Activated B cell treated with CpG ODN at 0.5 μM for 24 hours (primary cell): ENCODE measurements at regions of chr5 and their contacts with region 1.

Region 1: GRCh38 chr5:91225848-91226686 is 157.1 kb downstream of the ARRDC3 start:
- DNase-seq: peak; percentile 22
- ATAC-seq: peak; percentile 66
- H3K4me3 Mint-ChIP-seq: no peak overlapping the region
- H3K27ac Mint-ChIP-seq: no peak overlapping the region
- H3K4me1 Mint-ChIP-seq: no peaks in the 10 kb centered on the region
- H3K27me3 Mint-ChIP-seq: peaks cover under 1% of the 10 kb centered on the region
- CTCF ChIP-seq: peak; percentile 27

Region 2: GRCh38 chr5:90866333-90866732 is 359.7 kb before region 1 on chr5:
- CTCF ChIA-PET with region 1: no interaction called
- POLR2A ChIA-PET with region 1: no interaction called
- intact Hi-C with region 1: loop called (anchors 2 kb)
- DNase-seq: no peak
- ATAC-seq: peak; percentile 37
- H3K4me3 Mint-ChIP-seq: no peak overlapping the region
- H3K27ac Mint-ChIP-seq: no peak overlapping the region
- H3K4me1 Mint-ChIP-seq: peaks cover 2% of the 10 kb centered on the region
- H3K27me3 Mint-ChIP-seq: no peaks in the 10 kb centered on the region
- CTCF ChIP-seq: no peak

Region 3: DNA sequence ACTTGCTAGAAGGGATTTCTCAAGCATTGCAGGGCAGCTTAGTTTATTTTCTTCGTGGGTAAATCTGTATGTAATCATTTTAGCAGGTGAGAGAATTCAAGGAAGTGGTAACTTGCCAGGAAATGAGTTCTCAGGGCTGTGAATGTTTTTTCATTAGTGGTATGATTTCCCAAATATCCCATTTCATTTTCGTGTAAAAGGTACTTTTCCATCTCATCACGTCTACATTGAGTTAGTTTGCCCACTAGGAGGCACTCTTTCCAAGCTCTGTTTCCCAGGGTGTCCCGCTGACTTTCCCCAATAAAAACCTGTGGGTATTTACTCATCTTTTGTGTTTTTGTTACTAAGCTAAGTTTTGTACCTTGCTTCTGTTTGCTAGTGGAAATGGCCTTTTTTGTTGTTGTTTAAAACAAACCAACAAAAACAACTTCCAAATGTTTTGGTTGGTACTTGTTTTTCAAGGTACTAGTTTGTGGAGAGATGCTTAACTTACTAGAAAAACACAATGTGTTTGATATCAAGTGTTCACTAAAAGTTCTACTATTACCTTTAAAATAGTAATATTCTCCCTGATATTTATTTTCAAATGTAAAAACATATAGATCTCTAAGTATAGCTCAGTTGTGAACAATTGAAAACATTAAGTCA is 293.9 kb before region 1 on chr5:
- CTCF ChIA-PET with region 1: no interaction called
- POLR2A ChIA-PET with region 1: no interaction called
- intact Hi-C with region 1: loop called (anchors 2 kb)
- DNase-seq: no peak
- ATAC-seq: no peak
- H3K4me3 Mint-ChIP-seq: no peak overlapping the region
- H3K27ac Mint-ChIP-seq: no peak overlapping the region
- H3K4me1 Mint-ChIP-seq: no peaks in the 10 kb centered on the region
- H3K27me3 Mint-ChIP-seq: no peaks in the 10 kb centered on the region
- CTCF ChIP-seq: no peak

Region 4: GRCh38 chr5:91101600-91102379 is 124.3 kb before region 1 on chr5:
- CTCF ChIA-PET with region 1: no interaction called
- POLR2A ChIA-PET with region 1: no interaction called
- intact Hi-C with region 1: loop called (anchors 1 kb)
- DNase-seq: no peak
- ATAC-seq: peak; percentile 92
- H3K4me3 Mint-ChIP-seq: no peak overlapping the region
- H3K27ac Mint-ChIP-seq: no peak overlapping the region
- H3K4me1 Mint-ChIP-seq: no peaks in the 10 kb centered on the region
- H3K27me3 Mint-ChIP-seq: no peaks in the 10 kb centered on the region
- CTCF ChIP-seq: no peak

Region 5: GRCh38 chr5:91170266-91170665 is 55.8 kb before region 1 on chr5:
- CTCF ChIA-PET with region 1: no interaction called
- POLR2A ChIA-PET with region 1: no interaction called
- intact Hi-C with region 1: no loop called
- DNase-seq: no peak
- ATAC-seq: no peak
- H3K4me3 Mint-ChIP-seq: no peak overlapping the region
- H3K27ac Mint-ChIP-seq: no peak overlapping the region
- H3K4me1 Mint-ChIP-seq: no peaks in the 10 kb centered on the region
- H3K27me3 Mint-ChIP-seq: peaks cover 3% of the 10 kb centered on the region
- CTCF ChIP-seq: no peak

Region 6: GRCh38 chr5:91240175-91240574 is 14.1 kb after region 1 on chr5:
- CTCF ChIA-PET with region 1: no interaction called
- POLR2A ChIA-PET with region 1: no interaction called
- intact Hi-C with region 1: no loop called
- DNase-seq: no peak
- ATAC-seq: no peak
- H3K4me3 Mint-ChIP-seq: no peak overlapping the region
- H3K27ac Mint-ChIP-seq: no peak overlapping the region
- H3K4me1 Mint-ChIP-seq: no peaks in the 10 kb centered on the region
- H3K27me3 Mint-ChIP-seq: peaks cover 8% of the 10 kb centered on the region
- CTCF ChIP-seq: no peak

Region 7: GRCh38 chr5:91280362-91281269 is 54.5 kb after region 1 on chr5:
- CTCF ChIA-PET with region 1: no interaction called
- POLR2A ChIA-PET with region 1: no interaction called
- intact Hi-C with region 1: loop called (anchors 2 kb)
- DNase-seq: peak; percentile 80
- ATAC-seq: peak; percentile 88
- H3K4me3 Mint-ChIP-seq: peak overlapping the region; percentile 81
- H3K27ac Mint-ChIP-seq: peak overlapping the region; percentile 81
- H3K4me1 Mint-ChIP-seq: peaks cover 21% of the 10 kb centered on the region
- H3K27me3 Mint-ChIP-seq: peaks cover 8% of the 10 kb centered on the region
- CTCF ChIP-seq: no peak

Region 8: GRCh38 chr5:91311697-91312501 is 85.8 kb after region 1 on chr5:
- CTCF ChIA-PET with region 1: no interaction called
- POLR2A ChIA-PET with region 1: no interaction called
- intact Hi-C with region 1: loop called (anchors 1 kb)
- DNase-seq: no peak
- ATAC-seq: peak; percentile 84
- H3K4me3 Mint-ChIP-seq: peak overlapping the region; percentile 70
- H3K27ac Mint-ChIP-seq: peak overlapping the region; percentile 88
- H3K4me1 Mint-ChIP-seq: peaks cover 53% of the 10 kb centered on the region
- H3K27me3 Mint-ChIP-seq: no peaks in the 10 kb centered on the region
- CTCF ChIP-seq: no peak

Region 9: GRCh38 chr5:91419571-91420537 is 193.8 kb after region 1 on chr5:
- CTCF ChIA-PET with region 1: interaction called, 26 read pairs
- POLR2A ChIA-PET with region 1: no interaction called
- intact Hi-C with region 1: loop called (anchors 1 kb)
- DNase-seq: peak; percentile 21
- ATAC-seq: no peak
- H3K4me3 Mint-ChIP-seq: no peak overlapping the region
- H3K27ac Mint-ChIP-seq: no peak overlapping the region
- H3K4me1 Mint-ChIP-seq: no peaks in the 10 kb centered on the region
- H3K27me3 Mint-ChIP-seq: no peaks in the 10 kb centered on the region
- CTCF ChIP-seq: peak; percentile 38